MCF 10A (cell line): ENCODE measurements at regions of chr7 and their contacts with region 1.

Region 1: GRCh38 chr7:73606801-73607691 is 17.3 kb downstream of the MLXIPL start:
- DNase-seq: peak; percentile 51
- H3K4me3 Mint-ChIP-seq: no peak overlapping the region
- H3K27ac Mint-ChIP-seq: no peak overlapping the region
- H3K4me1 Mint-ChIP-seq: peaks cover 6% of the 10 kb centered on the region
- H3K27me3 Mint-ChIP-seq: no peaks in the 10 kb centered on the region
- CTCF ChIP-seq: peak; percentile 95

Region 2: GRCh38 chr7:73586911-73587310 is 20.1 kb before region 1 on chr7:
- CTCF ChIA-PET with region 1: interaction called, 12 read pairs
- POLR2A ChIA-PET with region 1: no interaction called
- intact Hi-C with region 1: no loop called
- DNase-seq: no peak
- H3K4me3 Mint-ChIP-seq: no peak overlapping the region
- H3K27ac Mint-ChIP-seq: no peak overlapping the region
- H3K4me1 Mint-ChIP-seq: peaks cover 6% of the 10 kb centered on the region
- H3K27me3 Mint-ChIP-seq: no peaks in the 10 kb centered on the region
- CTCF ChIP-seq: no peak

Region 3: GRCh38 chr7:73623798-73624668 is 17.0 kb after region 1 on chr7 and contains the start of gene MLXIPL:
- CTCF ChIA-PET with region 1: interaction called, 42 read pairs
- POLR2A ChIA-PET with region 1: no interaction called
- intact Hi-C with region 1: no loop called
- DNase-seq: peak; percentile 66
- H3K4me3 Mint-ChIP-seq: peak within 1 kb of the TSS; percentile 57
- H3K27ac Mint-ChIP-seq: no peak within 1 kb of the TSS
- H3K4me1 Mint-ChIP-seq: no peaks in the 10 kb centered on the region
- H3K27me3 Mint-ChIP-seq: peaks cover 5% of the 10 kb centered on the region
- CTCF ChIP-seq: no peak
- total RNA-seq, gene MLXIPL: 1.5 TPM in 1 of 2 replicates, not detected in the other

Region 4: DNA sequence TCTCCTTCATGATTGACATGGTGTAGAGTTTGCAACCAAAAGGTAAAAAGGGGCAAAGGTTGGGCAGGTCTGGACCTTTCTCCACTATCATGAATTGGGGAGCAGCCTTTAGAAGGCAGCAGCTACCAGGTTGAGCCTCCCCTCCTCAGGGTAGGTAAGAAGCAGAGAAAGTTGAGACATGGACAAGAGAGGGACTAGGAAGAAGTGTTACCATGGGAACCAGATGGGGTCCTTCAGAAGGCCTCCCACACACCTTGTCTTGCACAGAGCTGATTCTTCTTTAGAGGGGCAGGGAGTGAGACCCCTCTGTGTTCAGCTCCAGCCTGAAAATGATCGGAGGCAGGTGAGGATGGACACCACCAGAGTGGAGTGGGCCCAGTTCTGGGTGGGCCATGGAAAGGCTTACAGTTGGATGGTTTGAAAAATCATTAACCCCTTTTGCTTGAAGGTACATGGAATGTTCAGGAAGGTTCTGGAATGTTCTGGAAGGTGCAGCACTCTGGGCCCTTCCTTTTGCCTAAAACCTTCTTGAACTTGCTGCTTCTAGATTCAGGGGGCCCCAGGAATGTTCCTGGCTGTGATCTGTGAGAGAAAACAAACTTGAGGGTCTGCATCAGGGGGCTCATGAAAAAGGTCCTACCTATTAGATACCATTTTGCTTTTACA is 67.6 kb after region 1 on chr7:
- CTCF ChIA-PET with region 1: interaction called, 14 read pairs
- POLR2A ChIA-PET with region 1: no interaction called
- intact Hi-C with region 1: no loop called
- DNase-seq: no peak
- H3K4me3 Mint-ChIP-seq: no peak overlapping the region
- H3K27ac Mint-ChIP-seq: no peak overlapping the region
- H3K4me1 Mint-ChIP-seq: no peaks in the 10 kb centered on the region
- H3K27me3 Mint-ChIP-seq: no peaks in the 10 kb centered on the region
- CTCF ChIP-seq: no peak

Region 5: DNA sequence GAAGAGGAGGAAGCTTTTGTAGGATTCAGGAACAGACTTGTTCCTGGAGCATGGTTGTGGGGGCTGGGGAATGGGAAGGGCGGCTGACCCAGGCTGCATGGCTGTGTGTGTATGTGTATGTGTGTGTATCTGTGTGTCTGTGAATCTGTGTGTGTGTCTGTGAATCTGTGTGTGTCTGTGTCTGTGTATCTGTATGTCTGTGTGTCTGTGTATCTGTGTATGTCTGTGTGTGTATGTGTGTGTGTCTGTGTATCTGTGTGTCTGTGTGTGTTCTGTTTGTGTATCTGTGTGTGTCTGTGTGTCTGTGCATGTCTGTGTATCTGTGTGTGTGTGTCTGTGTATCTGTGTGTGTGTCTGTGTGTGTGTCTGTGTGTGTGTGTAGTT is 119.0 kb after region 1 on chr7:
- CTCF ChIA-PET with region 1: interaction called, 67 read pairs
- POLR2A ChIA-PET with region 1: interaction called, 3 read pairs
- intact Hi-C with region 1: loop called (anchors 1 kb)
- DNase-seq: no peak
- H3K4me3 Mint-ChIP-seq: no peak overlapping the region
- H3K27ac Mint-ChIP-seq: no peak overlapping the region
- H3K4me1 Mint-ChIP-seq: peaks cover 9% of the 10 kb centered on the region
- H3K27me3 Mint-ChIP-seq: no peaks in the 10 kb centered on the region
- CTCF ChIP-seq: no peak

Region 6: DNA sequence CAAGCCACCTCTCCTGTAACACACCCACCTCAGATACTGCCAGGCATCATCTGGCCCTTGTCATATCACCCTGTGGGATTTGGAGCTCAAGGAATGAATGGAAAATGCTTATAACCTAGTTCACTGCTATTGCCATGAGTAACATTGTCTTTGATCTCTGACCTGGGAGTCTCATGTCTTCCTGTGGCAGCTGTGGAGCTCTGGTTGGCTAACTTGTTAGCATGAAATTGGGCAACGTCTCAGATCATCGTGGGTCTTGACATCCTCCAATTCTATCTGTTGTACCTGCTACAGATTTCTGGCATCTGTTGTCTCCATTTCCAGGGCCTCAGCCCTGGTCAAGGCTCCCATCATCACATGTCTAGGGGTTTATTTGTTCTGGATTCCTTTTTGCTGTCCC is 251.8 kb after region 1 on chr7:
- CTCF ChIA-PET with region 1: interaction called, 10 read pairs
- POLR2A ChIA-PET with region 1: no interaction called
- intact Hi-C with region 1: loop called (anchors 5 kb)
- DNase-seq: no peak
- H3K4me3 Mint-ChIP-seq: no peak overlapping the region
- H3K27ac Mint-ChIP-seq: no peak overlapping the region
- H3K4me1 Mint-ChIP-seq: no peaks in the 10 kb centered on the region
- H3K27me3 Mint-ChIP-seq: peaks cover 12% of the 10 kb centered on the region
- CTCF ChIP-seq: no peak

Region 7: GRCh38 chr7:74606101-74606908 is 999.3 kb after region 1 on chr7:
- CTCF ChIA-PET with region 1: no interaction called
- POLR2A ChIA-PET with region 1: no interaction called
- intact Hi-C with region 1: no loop called
- DNase-seq: peak; percentile 46
- H3K4me3 Mint-ChIP-seq: peak overlapping the region; percentile 44
- H3K27ac Mint-ChIP-seq: peak overlapping the region; percentile 27
- H3K4me1 Mint-ChIP-seq: peaks cover 22% of the 10 kb centered on the region
- H3K27me3 Mint-ChIP-seq: no peaks in the 10 kb centered on the region
- CTCF ChIP-seq: no peak